ENCODE measurements at regions of chr2 and their contacts with region 1.

Region 1: DNA sequence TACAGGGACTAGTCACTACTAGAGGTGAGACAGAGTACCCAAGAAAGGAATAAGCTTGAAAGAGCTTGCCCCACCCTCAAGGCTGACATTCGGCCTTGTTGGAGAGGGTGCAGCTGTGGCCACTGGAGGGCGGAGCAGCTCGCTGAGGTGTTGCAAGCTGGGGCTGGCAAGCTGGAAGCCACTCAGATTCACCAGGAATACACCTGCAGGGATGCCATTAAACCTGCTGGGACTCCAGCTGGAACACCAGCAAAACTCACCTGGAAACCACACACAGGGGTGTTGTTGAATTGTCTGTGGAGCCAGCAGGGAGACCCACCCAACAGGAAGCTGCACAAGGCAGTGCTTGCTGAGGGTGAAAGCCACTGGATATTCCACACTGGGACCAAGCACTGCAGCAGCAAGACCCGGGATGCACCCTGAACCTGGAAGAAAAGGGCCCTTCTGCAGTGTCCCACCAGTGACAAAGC is 26.1 kb downstream of the KCTD18 start:
- DNase-seq: peak; percentile 85
- ATAC-seq: peak; percentile 64
- H3K4me3 ChIP-seq: no peak overlapping the region
- H3K27ac ChIP-seq: no peak overlapping the region
- H3K4me1 ChIP-seq: peaks cover 47% of the 10 kb centered on the region
- H3K27me3 ChIP-seq: no peaks in the 10 kb centered on the region
- CTCF ChIP-seq: peak; percentile 88

Region 2: DNA sequence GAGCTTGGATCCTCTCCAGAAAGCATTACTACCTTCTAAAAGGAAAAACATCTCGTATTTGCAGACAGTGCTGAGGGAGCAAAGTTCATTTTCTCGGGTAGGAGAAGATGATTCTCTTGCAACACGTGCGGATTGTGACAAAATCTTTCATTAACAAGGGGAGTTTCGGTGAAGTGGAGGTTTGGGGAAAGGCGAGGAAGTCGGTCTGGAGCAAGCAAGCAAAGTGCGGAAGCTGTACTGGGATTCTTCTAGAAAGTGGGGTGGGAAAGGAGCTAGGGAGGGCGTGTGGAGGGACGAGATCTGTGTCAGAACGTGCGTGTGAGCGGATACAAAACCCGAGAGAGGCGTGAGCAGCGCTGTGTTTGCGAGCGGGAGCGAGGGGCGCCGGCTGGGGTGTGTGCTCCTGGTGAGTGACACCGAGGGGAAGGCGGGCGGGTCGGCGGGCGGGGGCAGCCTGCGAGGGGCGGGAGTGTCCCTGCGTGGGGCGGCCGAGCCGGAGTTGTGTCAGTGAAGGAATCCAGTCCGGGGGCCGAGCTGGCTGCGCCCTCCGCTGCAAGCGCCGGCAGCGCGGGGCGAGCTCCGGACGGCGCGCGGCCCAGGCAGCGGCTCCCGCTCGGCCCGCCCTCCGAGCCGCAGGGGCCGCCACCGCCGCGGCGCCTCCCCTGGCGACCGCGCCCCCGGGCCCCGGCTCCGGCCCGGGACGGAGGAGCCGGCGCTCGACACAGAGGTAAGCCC is 177.4 kb before region 1 on chr2 and contains the start of gene SPATS2L:
- CTCF ChIA-PET with region 1: no interaction called
- POLR2A ChIA-PET with region 1: interaction called, 5 read pairs
- intact Hi-C with region 1: loop called (anchors 2 kb)
- DNase-seq: peak; percentile 84
- ATAC-seq: peak; percentile 62
- H3K4me3 ChIP-seq: peak within 1 kb of the TSS; percentile 85
- H3K27ac ChIP-seq: peak within 1 kb of the TSS; percentile 79
- H3K4me1 ChIP-seq: peaks cover 67% of the 10 kb centered on the region
- H3K27me3 ChIP-seq: no peaks in the 10 kb centered on the region
- CTCF ChIP-seq: no peak
- total RNA-seq, gene SPATS2L: 144 and 174 TPM in 2 replicates

Region 3: DNA sequence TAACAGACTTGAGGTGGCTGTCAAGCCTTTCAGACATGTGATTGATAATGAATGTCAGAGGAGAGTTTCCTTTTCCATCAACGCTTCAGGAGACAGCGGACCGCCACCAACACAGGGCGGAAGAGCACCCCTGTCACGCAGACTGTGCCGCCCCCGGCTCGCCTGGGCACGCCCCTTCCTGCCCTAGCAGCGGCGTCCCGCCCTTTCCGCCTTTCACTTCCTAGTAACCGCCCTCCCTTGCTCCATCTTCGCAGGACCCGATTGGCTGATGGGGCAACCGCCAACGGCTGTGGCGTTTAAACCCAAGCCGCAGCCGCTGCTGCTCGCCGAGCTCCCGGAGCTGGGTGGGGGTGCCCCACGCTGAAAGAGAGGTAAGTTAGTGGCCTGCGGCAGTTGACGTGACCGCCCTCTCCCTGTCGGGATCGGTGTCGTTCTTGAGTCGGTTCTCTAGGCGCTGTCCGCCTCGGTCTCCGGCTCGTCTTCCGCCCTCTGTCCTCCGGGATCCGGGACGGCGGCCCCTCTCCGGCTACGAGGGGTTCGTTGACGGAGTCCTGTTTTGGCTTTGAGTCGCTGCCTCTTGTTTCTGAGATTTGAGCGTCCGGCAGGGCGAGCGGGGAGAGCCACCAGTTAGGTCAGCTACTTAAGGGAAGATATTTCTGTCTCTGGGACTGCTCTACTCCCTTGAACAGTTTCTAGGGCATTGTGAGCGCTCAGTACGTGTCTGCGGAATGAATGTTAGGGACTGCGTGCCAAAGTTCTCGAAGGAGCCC is 42.3 kb after region 1 on chr2 and contains the start of gene SGO2:
- CTCF ChIA-PET with region 1: interaction called, 4 read pairs
- POLR2A ChIA-PET with region 1: no interaction called
- intact Hi-C with region 1: loop called (anchors 5 kb)
- DNase-seq: peak; percentile 98
- ATAC-seq: peak; percentile 90
- H3K4me3 ChIP-seq: peak within 1 kb of the TSS; percentile 92
- H3K27ac ChIP-seq: peak within 1 kb of the TSS; percentile 57
- H3K4me1 ChIP-seq: peaks cover 46% of the 10 kb centered on the region
- H3K27me3 ChIP-seq: no peaks in the 10 kb centered on the region
- CTCF ChIP-seq: no peak
- total RNA-seq, gene SGO2: 23.5 and 25.6 TPM in 2 replicates

Region 4: DNA sequence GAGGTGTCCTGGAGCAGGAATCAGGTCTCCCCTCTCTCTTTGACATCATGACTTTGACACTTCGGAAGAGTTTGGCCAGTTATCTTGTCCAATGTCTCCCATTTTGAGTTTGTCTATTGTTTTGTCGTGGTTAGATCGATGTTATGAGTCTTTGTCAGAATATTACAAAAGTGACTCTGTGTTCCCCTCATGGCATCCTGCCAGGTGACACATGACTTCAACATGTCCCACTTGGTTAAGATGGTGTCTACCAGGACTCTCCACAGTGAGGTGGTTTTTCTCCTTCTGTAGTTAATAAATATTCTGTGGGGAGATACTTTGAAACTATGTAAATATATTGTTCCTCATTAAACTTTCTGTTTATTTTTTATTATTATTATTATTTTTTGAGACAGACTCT is 251.3 kb after region 1 on chr2:
- CTCF ChIA-PET with region 1: interaction called, 15 read pairs
- POLR2A ChIA-PET with region 1: no interaction called
- intact Hi-C with region 1: no loop called
- DNase-seq: peak; percentile 39
- ATAC-seq: no peak
- H3K4me3 ChIP-seq: no peak overlapping the region
- H3K27ac ChIP-seq: no peak overlapping the region
- H3K4me1 ChIP-seq: peaks cover 4% of the 10 kb centered on the region
- H3K27me3 ChIP-seq: no peaks in the 10 kb centered on the region
- CTCF ChIP-seq: no peak